ENCODE measurements at regions of chr14 and their contacts with region 1.

Region 1: DNA sequence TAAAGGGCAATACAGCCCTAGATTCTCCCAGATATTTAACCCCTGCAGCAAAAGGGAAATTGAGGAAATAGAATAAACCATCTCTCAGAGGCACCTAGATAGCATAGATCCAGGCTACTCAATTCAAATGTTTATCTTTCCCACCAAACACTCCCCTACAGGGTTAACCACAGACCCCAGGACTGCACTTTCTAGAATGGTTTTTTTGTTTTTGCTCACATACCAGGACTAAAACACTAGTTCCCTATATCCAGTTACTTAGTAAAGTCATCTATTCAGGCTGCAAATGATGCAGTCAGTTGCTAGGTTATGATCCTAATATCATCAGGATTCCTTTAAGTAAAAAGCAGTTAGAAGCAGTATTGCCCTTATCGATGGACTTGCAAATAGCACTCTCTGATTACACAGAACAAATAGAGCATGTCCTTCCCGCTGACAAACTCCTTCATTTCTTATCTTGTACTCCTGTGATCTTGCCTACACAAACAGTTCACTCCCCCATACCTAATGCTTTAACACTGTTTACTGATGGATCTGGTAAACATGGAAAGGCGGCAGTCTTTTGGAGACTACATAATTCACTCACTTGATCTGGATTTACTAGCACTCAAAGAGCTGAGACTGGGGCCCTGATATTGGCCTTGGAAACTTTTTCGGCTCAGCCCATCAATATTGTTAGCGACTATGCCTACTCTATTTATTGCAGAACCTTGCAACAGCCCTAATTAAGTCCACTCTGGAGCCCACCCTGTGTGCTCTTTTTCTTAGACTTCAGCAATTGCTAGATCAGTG is 257.2 kb upstream of the DIO2 start:
- DNase-seq: peak; percentile 99
- ATAC-seq: peak; percentile 98
- H3K4me3 ChIP-seq: no peak overlapping the region
- H3K27ac ChIP-seq: peak overlapping the region; percentile 37
- H3K4me1 ChIP-seq: peaks cover 19% of the 10 kb centered on the region
- H3K27me3 ChIP-seq: peaks cover 4 to 73% of the 10 kb centered on the region in 2 experiments
- CTCF ChIP-seq: no peak
- EP300 ChIP-seq: peak; percentile 97 to 98
- POLR2A ChIP-seq: no peak
- RAD21 ChIP-seq: no peak

Region 2: GRCh38 chr14:80504781-80505180 is 36.3 kb after region 1 on chr14:
- CTCF ChIA-PET with region 1: no interaction called
- POLR2A ChIA-PET with region 1: no interaction called
- in situ Hi-C with region 1: no loop called
- intact Hi-C with region 1: no loop called
- DNase-seq: no peak
- ATAC-seq: no peak
- H3K4me3 ChIP-seq: no peak overlapping the region
- H3K27ac ChIP-seq: no peak overlapping the region
- H3K4me1 ChIP-seq: no peaks in the 10 kb centered on the region
- H3K27me3 ChIP-seq: no peaks in the 10 kb centered on the region
- CTCF ChIP-seq: no peak
- EP300 ChIP-seq: no peak
- POLR2A ChIP-seq: no peak
- RAD21 ChIP-seq: no peak

Region 3: GRCh38 chr14:80536456-80536855 is 67.9 kb after region 1 on chr14:
- CTCF ChIA-PET with region 1: no interaction called
- POLR2A ChIA-PET with region 1: no interaction called
- in situ Hi-C with region 1: no loop called
- intact Hi-C with region 1: loop called (anchors 5 kb)
- DNase-seq: no peak
- ATAC-seq: no peak
- H3K4me3 ChIP-seq: no peak overlapping the region
- H3K27ac ChIP-seq: no peak overlapping the region
- H3K4me1 ChIP-seq: no peaks in the 10 kb centered on the region
- H3K27me3 ChIP-seq: no peaks in the 10 kb centered on the region
- CTCF ChIP-seq: no peak
- EP300 ChIP-seq: no peak
- POLR2A ChIP-seq: no peak
- RAD21 ChIP-seq: no peak

Region 4: DNA sequence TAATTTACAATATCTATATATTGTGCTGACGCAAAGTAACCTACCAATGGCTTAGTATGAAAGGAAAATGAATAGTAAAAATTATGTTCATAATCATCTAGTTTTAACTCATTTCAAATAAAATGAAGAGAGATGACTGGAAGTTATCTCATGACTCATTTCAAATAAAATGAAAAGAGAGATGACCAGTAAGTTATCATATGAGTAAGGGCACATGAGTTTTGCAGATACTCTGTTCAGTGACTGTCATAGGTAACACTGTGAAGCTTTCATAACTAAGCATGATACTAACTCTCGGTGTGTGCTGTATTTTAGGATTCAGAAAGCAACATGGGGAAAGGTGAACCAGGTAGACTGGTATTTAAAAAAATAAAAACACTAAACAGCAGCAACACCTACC is 107.2 kb after region 1 on chr14:
- CTCF ChIA-PET with region 1: no interaction called
- POLR2A ChIA-PET with region 1: no interaction called
- in situ Hi-C with region 1: no loop called
- intact Hi-C with region 1: loop called (anchors 2 kb)
- DNase-seq: no peak
- ATAC-seq: no peak
- H3K4me3 ChIP-seq: no peak overlapping the region
- H3K27ac ChIP-seq: no peak overlapping the region
- H3K4me1 ChIP-seq: peaks cover 37% of the 10 kb centered on the region
- H3K27me3 ChIP-seq: no peaks in the 10 kb centered on the region
- CTCF ChIP-seq: no peak
- EP300 ChIP-seq: no peak
- POLR2A ChIP-seq: no peak
- RAD21 ChIP-seq: no peak

Measured in HepG2 (cell line).